Activated CD8-positive, alpha-beta T cell treated with anti-CD3 and anti-CD28 coated beads, Interleukin-2, amount 10 ng/mL, durations not matched to agents 7 days and 5 days (primary cell): ENCODE measurements at regions of chr17 and their contacts with region 1.

Region 1: DNA sequence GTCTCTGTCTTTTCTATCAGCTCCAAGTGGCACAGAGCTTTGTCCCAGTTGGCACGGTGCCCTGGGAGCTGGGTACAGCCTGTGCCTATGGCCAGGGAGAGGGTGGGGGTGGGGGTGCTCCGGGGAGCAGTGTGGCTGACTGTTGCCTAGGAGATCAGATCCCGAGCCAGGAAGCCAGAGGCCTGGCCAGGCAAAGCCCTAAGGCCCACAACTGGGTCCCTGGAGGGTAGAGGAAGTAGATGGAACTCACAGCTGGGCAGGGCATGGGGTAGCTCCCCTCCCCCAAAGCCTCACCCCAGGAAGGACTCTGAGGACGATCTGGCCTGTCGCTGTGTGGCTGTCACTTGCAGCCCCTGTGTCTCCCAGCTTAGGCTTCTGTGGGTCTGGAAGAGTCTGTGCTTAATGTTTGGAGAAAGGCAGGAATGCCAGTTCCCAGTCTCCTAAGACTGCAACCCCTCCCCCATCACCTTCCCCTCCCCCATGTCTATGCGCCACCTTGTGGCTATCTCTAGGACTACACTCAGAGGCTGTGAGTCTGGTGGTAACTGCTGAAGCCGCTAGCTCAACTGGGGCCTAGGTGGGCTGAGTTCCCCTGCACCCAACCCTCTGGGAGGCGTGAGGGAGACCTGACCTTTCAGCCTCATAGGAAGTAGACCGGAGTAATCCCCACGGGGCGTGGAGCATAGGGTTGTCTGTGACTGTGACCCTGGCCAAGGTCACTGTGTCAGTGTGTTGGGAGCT is 12.6 kb downstream of the THRA start:
- DNase-seq: peak; percentile 75
- ATAC-seq: peak; percentile 83
- H3K4me3 Mint-ChIP-seq: no peak overlapping the region
- H3K27ac Mint-ChIP-seq: peak overlapping the region; percentile 71
- H3K4me1 Mint-ChIP-seq: peaks cover 19% of the 10 kb centered on the region
- H3K27me3 Mint-ChIP-seq: no peaks in the 10 kb centered on the region

Region 2: GRCh38 chr17:40019140-40019991 is 56.0 kb before region 1 on chr17:
- CTCF ChIA-PET with region 1: interaction called, 24 read pairs
- POLR2A ChIA-PET with region 1: no interaction called
- DNase-seq: no peak
- ATAC-seq: no peak
- H3K4me3 Mint-ChIP-seq: no peak overlapping the region
- H3K27ac Mint-ChIP-seq: no peak overlapping the region
- H3K4me1 Mint-ChIP-seq: peaks cover 3% of the 10 kb centered on the region
- H3K27me3 Mint-ChIP-seq: no peaks in the 10 kb centered on the region

Region 3: DNA sequence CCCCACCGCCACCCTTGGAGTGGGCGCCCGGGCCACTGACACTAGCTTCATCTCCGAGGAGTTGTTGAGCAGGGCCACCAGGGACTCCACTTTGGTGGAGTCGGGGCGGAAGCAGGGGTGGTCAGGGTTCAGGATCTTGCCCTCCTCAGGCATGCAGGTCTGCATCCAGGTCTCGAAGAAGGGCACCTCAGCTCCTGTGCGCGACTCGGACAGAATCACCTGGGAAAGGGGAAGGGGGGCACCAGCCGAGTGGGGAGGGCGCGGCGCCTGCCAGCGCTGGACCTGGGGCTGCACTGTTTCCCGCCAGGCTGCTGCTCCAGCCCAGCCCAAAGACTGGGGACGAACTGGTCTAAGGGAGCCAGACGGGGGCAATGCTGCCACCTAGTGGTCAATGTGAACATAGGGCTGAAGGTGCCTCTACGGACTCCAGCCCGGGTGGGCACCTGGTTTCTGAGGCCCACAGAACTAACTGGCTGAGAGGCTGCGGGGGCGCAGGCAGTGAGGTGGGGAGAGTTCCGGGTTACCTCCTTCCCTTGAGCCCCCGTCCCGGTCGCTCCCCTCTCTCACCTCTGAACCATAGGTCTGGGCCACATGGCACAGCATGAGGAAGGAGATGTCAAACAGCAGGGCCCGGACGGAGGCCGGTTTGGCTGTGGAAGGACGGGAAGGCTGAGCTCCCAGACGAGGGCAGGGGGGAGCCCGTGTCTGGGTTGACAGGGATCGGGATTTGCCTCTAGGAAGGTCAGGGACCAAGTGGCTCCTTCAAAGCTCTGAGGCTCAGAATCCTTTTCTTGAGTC is 48.4 kb before region 1 on chr17:
- CTCF ChIA-PET with region 1: interaction called, 11 read pairs
- POLR2A ChIA-PET with region 1: no interaction called
- DNase-seq: peak; percentile 85
- ATAC-seq: peak; percentile 91
- H3K4me3 Mint-ChIP-seq: no peak overlapping the region
- H3K27ac Mint-ChIP-seq: no peak overlapping the region
- H3K4me1 Mint-ChIP-seq: peaks cover 23% of the 10 kb centered on the region
- H3K27me3 Mint-ChIP-seq: no peaks in the 10 kb centered on the region

Region 4: GRCh38 chr17:40062329-40063186 is 12.8 kb before region 1 on chr17 and contains the start of gene THRA:
- CTCF ChIA-PET with region 1: interaction called, 90 read pairs
- POLR2A ChIA-PET with region 1: interaction called, 4 read pairs
- DNase-seq: peak; percentile 70
- ATAC-seq: peak; percentile 93
- H3K4me3 Mint-ChIP-seq: peak within 1 kb of the TSS; percentile 80
- H3K27ac Mint-ChIP-seq: peak within 1 kb of the TSS; percentile 46
- H3K4me1 Mint-ChIP-seq: peaks cover 36% of the 10 kb centered on the region
- H3K27me3 Mint-ChIP-seq: peaks cover 29% of the 10 kb centered on the region
- total RNA-seq, gene THRA: 8.7 to 9.7 TPM

Region 5: GRCh38 chr17:40091691-40092397 is 16.5 kb after region 1 on chr17:
- CTCF ChIA-PET with region 1: interaction called, 75 read pairs
- POLR2A ChIA-PET with region 1: interaction called, 5 read pairs
- DNase-seq: no peak
- ATAC-seq: no peak
- H3K4me3 Mint-ChIP-seq: no peak overlapping the region
- H3K27ac Mint-ChIP-seq: no peak overlapping the region
- H3K4me1 Mint-ChIP-seq: peaks cover 31% of the 10 kb centered on the region
- H3K27me3 Mint-ChIP-seq: no peaks in the 10 kb centered on the region

Region 6: GRCh38 chr17:40098846-40099618 is 23.7 kb after region 1 on chr17:
- CTCF ChIA-PET with region 1: interaction called, 17 read pairs
- POLR2A ChIA-PET with region 1: interaction called, 5 read pairs
- DNase-seq: peak; percentile 97
- ATAC-seq: peak; percentile 62
- H3K4me3 Mint-ChIP-seq: peak overlapping the region; percentile 82
- H3K27ac Mint-ChIP-seq: peak overlapping the region; percentile 78
- H3K4me1 Mint-ChIP-seq: peaks cover 91% of the 10 kb centered on the region
- H3K27me3 Mint-ChIP-seq: no peaks in the 10 kb centered on the region

Region 7: DNA sequence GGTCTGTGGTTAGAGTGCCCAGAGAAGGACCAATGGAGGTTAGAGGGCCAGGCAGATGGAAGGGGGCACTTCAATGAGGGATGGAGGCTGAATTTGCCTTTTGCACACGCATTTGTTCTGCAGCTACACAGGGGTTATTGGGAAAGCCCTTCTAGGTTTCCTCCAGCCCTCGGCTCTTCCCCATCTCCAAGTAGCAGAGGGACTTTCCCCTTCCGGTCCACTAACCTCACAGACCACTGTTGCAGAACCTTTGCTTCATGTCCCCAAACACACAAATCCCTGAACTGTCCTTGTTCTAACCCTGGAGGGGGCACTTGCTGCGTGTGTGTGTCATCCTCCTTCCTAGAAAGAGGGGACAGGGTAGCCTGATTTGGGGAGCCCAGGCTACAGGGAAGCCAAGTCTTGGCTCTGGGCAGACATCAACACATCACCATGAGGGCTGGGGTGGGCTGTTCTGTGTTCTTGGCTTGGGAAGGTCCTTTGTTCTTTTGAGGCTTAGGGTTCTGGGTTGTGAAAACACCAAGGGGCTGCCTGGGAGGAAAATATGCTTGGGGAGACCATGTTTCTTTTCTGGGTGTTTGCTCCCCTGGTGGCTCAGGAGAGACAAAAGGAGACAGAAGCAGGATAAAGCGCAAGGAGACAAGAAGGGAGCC is 32.3 kb after region 1 on chr17:
- CTCF ChIA-PET with region 1: interaction called, 93 read pairs
- POLR2A ChIA-PET with region 1: no interaction called
- DNase-seq: peak; percentile 27
- ATAC-seq: peak; percentile 11
- H3K4me3 Mint-ChIP-seq: peak overlapping the region; percentile 51
- H3K27ac Mint-ChIP-seq: peak overlapping the region; percentile 87
- H3K4me1 Mint-ChIP-seq: peaks cover 99% of the 10 kb centered on the region
- H3K27me3 Mint-ChIP-seq: no peaks in the 10 kb centered on the region